ENCODE measurements at regions of chr5 and their contacts with region 1.

Region 1: GRCh38 chr5:1488943-1489680 is 34.6 kb downstream of the LPCAT1 start:
- DNase-seq: peak; percentile 77
- ATAC-seq: peak; percentile 31
- H3K4me3 ChIP-seq: no peak overlapping the region
- H3K4me3 Mint-ChIP-seq: peak overlapping the region; percentile 81
- H3K27ac ChIP-seq: peak overlapping the region; percentile 87 to 96
- H3K27ac Mint-ChIP-seq: peak overlapping the region; percentile 98
- H3K4me1 ChIP-seq: peaks cover 78 to 99% of the 10 kb centered on the region in 2 donors
- H3K4me1 Mint-ChIP-seq: peaks cover 97% of the 10 kb centered on the region
- H3K27me3 ChIP-seq: no peaks in the 10 kb centered on the region
- H3K27me3 Mint-ChIP-seq: no peaks in the 10 kb centered on the region
- CTCF ChIP-seq: no peak

Region 2: GRCh38 chr5:171801-172331 is 1317.2 kb before region 1 on chr5:
- CTCF ChIA-PET with region 1: no interaction called
- POLR2A ChIA-PET with region 1: no interaction called
- intact Hi-C with region 1: no loop called
- DNase-seq: no peak
- ATAC-seq: no peak
- H3K4me3 ChIP-seq: no peak overlapping the region
- H3K4me3 Mint-ChIP-seq: no peak overlapping the region
- H3K27ac ChIP-seq: no peak overlapping the region
- H3K27ac Mint-ChIP-seq: no peak overlapping the region
- H3K4me1 ChIP-seq: no peaks in the 10 kb centered on the region
- H3K4me1 Mint-ChIP-seq: no peaks in the 10 kb centered on the region
- H3K27me3 ChIP-seq: no peaks in the 10 kb centered on the region
- H3K27me3 Mint-ChIP-seq: peaks cover 9% of the 10 kb centered on the region
- CTCF ChIP-seq: no peak

Region 3: DNA sequence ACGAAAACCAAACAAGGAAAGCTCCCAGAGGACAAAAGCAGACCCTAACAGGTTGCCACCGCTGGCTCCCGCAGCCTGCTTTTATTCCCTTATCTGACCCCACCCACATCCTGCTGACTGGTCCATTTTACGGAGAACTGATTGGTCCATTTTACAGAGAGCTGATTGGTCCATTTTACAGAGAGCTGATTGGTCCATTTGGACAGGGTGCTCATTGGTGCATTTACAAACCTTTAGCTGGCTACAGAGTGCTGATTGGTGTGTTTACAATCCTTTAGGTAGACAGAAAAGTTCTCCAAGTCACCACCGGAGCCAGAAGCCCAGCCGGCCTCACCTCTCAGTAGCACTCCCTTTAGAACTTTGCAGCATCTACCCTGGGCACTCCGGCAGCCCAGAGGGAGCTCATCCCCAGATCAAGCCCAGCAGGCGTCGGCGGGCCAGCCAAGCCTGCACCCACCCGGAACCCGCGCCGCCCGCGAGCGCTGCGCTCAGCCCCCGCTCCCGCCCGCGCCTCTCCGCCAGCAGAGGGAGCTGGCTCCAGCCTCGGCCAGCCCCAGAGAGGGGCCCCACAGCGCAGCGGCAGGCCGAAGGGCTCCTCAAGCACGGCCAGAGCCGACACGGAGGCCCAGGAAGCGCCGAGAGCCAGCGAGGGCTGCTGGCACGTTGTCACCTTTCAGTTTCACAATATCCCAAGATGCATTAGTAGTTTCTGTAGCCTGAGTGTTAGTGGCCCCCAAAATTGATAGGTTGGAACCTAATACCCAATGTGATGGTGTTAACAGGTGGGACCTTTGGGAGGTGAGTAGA is 108.9 kb before region 1 on chr5:
- CTCF ChIA-PET with region 1: interaction called, 6 read pairs
- POLR2A ChIA-PET with region 1: no interaction called
- intact Hi-C with region 1: loop called (anchors 2 kb)
- DNase-seq: peak; percentile 83
- ATAC-seq: peak; percentile 93
- H3K4me3 ChIP-seq: peak overlapping the region in 4 of 5 experiments; percentile 21 to 56 (median 39)
- H3K4me3 Mint-ChIP-seq: peak overlapping the region; percentile 85
- H3K27ac ChIP-seq: no peak overlapping the region
- H3K27ac Mint-ChIP-seq: peak overlapping the region; percentile 74
- H3K4me1 ChIP-seq: peaks cover 5 to 12% of the 10 kb centered on the region in 2 donors
- H3K4me1 Mint-ChIP-seq: peaks cover 22% of the 10 kb centered on the region
- H3K27me3 ChIP-seq: no peaks in the 10 kb centered on the region
- H3K27me3 Mint-ChIP-seq: no peaks in the 10 kb centered on the region
- CTCF ChIP-seq: peak; percentile 96

Region 4: DNA sequence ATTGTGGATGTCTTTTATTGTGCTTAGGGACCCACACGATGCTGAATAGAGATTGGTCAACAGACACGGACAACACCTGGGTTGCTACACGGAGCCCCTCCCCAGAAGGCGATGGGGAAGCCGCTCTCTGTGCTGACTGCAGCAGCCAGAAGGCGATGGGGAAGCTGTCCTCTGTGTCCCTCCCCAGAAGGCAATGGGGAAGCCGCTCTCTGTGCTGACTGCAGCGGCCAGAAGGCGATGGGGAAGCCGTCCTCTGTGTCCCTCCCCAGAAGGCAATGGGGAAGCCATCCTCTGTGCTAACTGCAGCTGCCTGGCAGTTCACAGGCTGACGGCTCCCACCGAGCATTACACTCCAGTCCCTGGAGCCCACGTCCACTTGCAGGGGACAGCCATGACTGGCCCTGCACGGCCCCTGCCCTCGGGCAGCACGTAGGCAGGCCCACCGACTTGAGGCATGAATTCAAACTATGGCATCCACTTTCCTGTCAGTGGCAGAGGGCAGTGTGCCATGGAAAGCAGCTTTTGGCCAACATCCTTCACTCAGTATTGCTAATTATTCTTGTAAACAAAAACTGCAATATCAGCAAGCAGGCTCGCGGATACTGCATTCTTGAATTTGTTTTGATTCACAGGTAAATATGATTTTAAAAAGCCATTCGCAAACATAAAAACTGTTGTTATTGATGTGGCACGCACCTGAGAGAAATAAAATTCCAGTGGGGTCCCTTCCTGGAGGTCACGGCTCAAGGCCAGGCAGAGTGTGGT is 96.1 kb before region 1 on chr5:
- CTCF ChIA-PET with region 1: no interaction called
- POLR2A ChIA-PET with region 1: no interaction called
- intact Hi-C with region 1: no loop called
- DNase-seq: no peak
- ATAC-seq: no peak
- H3K4me3 ChIP-seq: no peak overlapping the region
- H3K4me3 Mint-ChIP-seq: no peak overlapping the region
- H3K27ac ChIP-seq: no peak overlapping the region
- H3K27ac Mint-ChIP-seq: no peak overlapping the region
- H3K4me1 ChIP-seq: no peaks in the 10 kb centered on the region
- H3K4me1 Mint-ChIP-seq: no peaks in the 10 kb centered on the region
- H3K27me3 ChIP-seq: peaks cover 0 to 33% (median 4%) of the 10 kb centered on the region in 4 experiments
- H3K27me3 Mint-ChIP-seq: peaks cover 44% of the 10 kb centered on the region
- CTCF ChIP-seq: no peak

Region 5: GRCh38 chr5:1503241-1504068 is 14.3 kb after region 1 on chr5:
- CTCF ChIA-PET with region 1: interaction called, 81 read pairs
- POLR2A ChIA-PET with region 1: interaction called, 36 read pairs
- intact Hi-C with region 1: loop called (anchors 1 kb)
- DNase-seq: peak; percentile 81
- ATAC-seq: peak; percentile 34
- H3K4me3 ChIP-seq: peak overlapping the region in 4 of 5 experiments; percentile 5 to 54 (median 40)
- H3K4me3 Mint-ChIP-seq: peak overlapping the region; percentile 83
- H3K27ac ChIP-seq: peak overlapping the region; percentile 91 to 96
- H3K27ac Mint-ChIP-seq: peak overlapping the region; percentile 95
- H3K4me1 ChIP-seq: peaks cover 80 to 89% of the 10 kb centered on the region in 2 donors
- H3K4me1 Mint-ChIP-seq: peaks cover 83% of the 10 kb centered on the region
- H3K27me3 ChIP-seq: no peaks in the 10 kb centered on the region
- H3K27me3 Mint-ChIP-seq: no peaks in the 10 kb centered on the region
- CTCF ChIP-seq: no peak

Region 6: DNA sequence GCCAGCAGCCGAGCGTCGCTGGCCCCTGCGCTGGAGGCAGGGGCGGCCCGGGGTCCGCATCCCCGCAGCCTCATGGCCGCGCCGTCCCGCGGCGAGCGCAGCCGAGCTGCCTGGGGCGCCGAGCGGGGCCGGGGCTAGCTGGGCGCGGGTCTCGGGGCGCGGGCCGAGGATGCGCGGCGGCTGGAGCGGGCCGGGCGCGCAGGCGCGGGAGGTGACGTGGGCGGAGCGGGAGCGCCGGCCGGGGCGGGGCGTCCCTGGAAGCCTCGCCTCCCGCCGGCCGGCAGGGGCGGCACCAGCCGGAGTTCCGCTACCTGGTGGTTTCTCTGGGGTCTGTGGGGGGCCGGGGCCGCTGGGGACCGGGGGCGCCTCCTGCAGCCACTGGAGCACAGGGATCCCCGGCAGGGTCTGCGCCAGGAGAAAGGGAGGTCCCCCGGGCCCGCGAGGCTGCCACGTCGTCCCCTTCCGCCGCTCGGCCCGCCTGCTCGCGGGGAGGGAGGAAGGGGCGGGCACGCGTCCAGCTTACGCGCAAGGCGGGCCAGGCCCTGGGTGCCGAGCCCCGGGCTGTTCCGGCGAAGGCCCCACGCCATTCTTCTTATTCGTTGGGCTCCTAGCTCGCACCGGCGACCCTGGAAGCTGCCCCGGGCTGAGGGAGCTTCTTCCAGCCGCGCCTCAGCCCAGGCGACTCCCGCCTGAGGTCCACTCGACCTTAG is 34.8 kb after region 1 on chr5 and contains the start of gene LPCAT1:
- CTCF ChIA-PET with region 1: interaction called, 4 read pairs
- POLR2A ChIA-PET with region 1: interaction called, 4 read pairs
- intact Hi-C with region 1: loop called (anchors 5 kb)
- DNase-seq: peak; percentile 88
- ATAC-seq: peak; percentile 85
- H3K4me3 ChIP-seq: peak within 1 kb of the TSS; percentile 32 to 74 (median 64)
- H3K4me3 Mint-ChIP-seq: peak within 1 kb of the TSS; percentile 88
- H3K27ac ChIP-seq: peak within 1 kb of the TSS; percentile 76 to 90
- H3K27ac Mint-ChIP-seq: peak within 1 kb of the TSS; percentile 91
- H3K4me1 ChIP-seq: peaks cover 39 to 53% of the 10 kb centered on the region in 2 donors
- H3K4me1 Mint-ChIP-seq: peaks cover 53% of the 10 kb centered on the region
- H3K27me3 ChIP-seq: no peaks in the 10 kb centered on the region
- H3K27me3 Mint-ChIP-seq: no peaks in the 10 kb centered on the region
- CTCF ChIP-seq: no peak
- total RNA-seq, gene LPCAT1: 152 and 159 TPM in 2 replicates

Region 7: DNA sequence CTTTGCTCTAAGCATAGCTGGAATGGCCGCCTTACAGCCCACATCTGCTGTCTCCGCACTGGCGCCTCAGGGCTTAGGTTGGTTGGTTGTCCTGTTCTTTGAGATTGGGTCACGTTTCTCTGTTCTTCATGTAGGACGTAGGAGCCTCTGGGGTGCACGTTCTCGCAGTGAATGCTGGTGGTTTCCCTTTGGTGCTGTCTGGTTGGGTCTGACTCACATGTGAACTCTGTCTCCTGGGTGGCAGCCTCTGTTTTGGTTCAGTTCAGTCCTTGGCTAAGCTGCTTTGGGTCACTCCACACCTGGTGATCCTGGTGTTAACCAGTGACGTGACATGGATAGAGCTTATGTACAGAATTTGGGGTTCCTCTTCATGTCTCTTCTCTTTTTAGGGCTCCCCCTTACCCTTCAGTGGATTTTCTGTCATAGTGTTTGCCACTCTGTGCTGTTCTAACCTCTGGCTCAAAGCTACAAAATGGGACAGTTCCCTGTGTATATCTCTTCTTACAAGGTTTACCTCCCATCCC is 47.3 kb after region 1 on chr5:
- CTCF ChIA-PET with region 1: interaction called, 5 read pairs
- POLR2A ChIA-PET with region 1: no interaction called
- intact Hi-C with region 1: loop called (anchors 2 kb)
- DNase-seq: peak; percentile 89
- ATAC-seq: peak; percentile 96
- H3K4me3 ChIP-seq: peak overlapping the region; percentile 35 to 81 (median 47)
- H3K4me3 Mint-ChIP-seq: peak overlapping the region; percentile 71
- H3K27ac ChIP-seq: peak overlapping the region; percentile 85 to 98
- H3K27ac Mint-ChIP-seq: peak overlapping the region; percentile 95
- H3K4me1 ChIP-seq: peaks cover 19% of the 10 kb centered on the region in 2 donors
- H3K4me1 Mint-ChIP-seq: peaks cover 32% of the 10 kb centered on the region
- H3K27me3 ChIP-seq: no peaks in the 10 kb centered on the region
- H3K27me3 Mint-ChIP-seq: no peaks in the 10 kb centered on the region
- CTCF ChIP-seq: no peak

Region 8: GRCh38 chr5:1594357-1595106 is 105.4 kb after region 1 on chr5:
- CTCF ChIA-PET with region 1: interaction called, 4 read pairs
- POLR2A ChIA-PET with region 1: interaction called, 3 read pairs
- intact Hi-C with region 1: loop called (anchors 1 kb)
- DNase-seq: peak; percentile 92
- ATAC-seq: peak; percentile 93
- H3K4me3 ChIP-seq: peak overlapping the region; percentile 11 to 90 (median 78)
- H3K4me3 Mint-ChIP-seq: peak overlapping the region; percentile 86
- H3K27ac ChIP-seq: peak overlapping the region; percentile 68 to 72
- H3K27ac Mint-ChIP-seq: peak overlapping the region; percentile 85
- H3K4me1 ChIP-seq: peaks cover 0 to 12% of the 10 kb centered on the region in 2 donors
- H3K4me1 Mint-ChIP-seq: peaks cover 22% of the 10 kb centered on the region
- H3K27me3 ChIP-seq: no peaks in the 10 kb centered on the region
- H3K27me3 Mint-ChIP-seq: no peaks in the 10 kb centered on the region
- CTCF ChIP-seq: peak; percentile 57